Dendritic cell treated with granulocyte-macrophage colony-stimulating factor and Interleukin-4, amounts not matched to agents 40 ng/mL and 50 ng/mL, for 4 days (primary cell): ENCODE measurements at regions of chr10 and their contacts with region 1.

Region 1: GRCh38 chr10:4333459-4333894 is 492.5 kb upstream of the AKR1E2 start:
- H3K4me3 Mint-ChIP-seq: no peak overlapping the region
- H3K27ac Mint-ChIP-seq: no peak overlapping the region
- H3K4me1 Mint-ChIP-seq: peaks cover 6% of the 10 kb centered on the region
- H3K27me3 Mint-ChIP-seq: no peaks in the 10 kb centered on the region

Region 2: DNA sequence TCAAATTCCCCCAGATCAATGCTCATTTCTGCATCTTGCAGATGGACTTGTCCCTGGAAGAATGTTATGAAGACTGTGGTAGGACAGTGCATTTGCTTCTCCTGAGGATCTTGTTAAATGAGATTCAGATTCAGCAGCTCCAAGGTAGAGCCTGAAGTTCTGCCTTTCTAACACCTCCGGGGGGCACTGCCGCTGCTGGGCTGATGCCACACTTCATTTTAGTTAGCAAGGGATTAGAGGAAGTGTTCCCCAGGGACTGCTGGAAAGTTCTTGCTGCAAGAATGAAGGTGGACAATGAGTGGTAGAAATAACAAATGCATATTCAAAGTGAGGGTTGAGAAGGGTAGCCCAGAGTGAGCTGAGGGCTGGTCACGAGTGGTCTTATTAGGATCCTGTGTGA is 58.2 kb after region 1 on chr10:
- intact Hi-C with region 1: no loop called
- H3K4me3 Mint-ChIP-seq: no peak overlapping the region
- H3K27ac Mint-ChIP-seq: no peak overlapping the region
- H3K4me1 Mint-ChIP-seq: no peaks in the 10 kb centered on the region
- H3K27me3 Mint-ChIP-seq: peaks cover 7% of the 10 kb centered on the region

Region 3: DNA sequence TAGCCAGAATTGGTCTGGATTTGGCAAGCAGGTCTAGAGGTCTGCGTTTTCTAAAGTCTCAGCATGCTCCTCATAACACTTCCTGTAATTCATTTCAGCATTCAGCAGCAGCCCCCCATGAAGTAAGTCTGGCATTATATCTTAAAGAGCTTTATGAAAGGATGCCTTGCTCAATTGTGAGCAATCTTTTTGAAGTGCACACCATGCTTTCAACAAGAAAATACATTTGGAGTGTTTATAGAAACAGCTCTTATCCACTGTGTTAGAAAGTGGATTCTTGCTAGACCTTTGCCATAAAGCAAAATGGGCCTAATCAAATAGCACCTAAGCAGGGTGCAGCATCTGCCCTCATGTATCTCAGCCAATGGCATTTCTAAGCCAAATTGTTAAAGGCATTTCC is 114.6 kb after region 1 on chr10:
- intact Hi-C with region 1: loop called (anchors 10 kb)
- H3K4me3 Mint-ChIP-seq: no peak overlapping the region
- H3K27ac Mint-ChIP-seq: no peak overlapping the region
- H3K4me1 Mint-ChIP-seq: peaks cover 19% of the 10 kb centered on the region
- H3K27me3 Mint-ChIP-seq: peaks cover 2% of the 10 kb centered on the region

Region 4: GRCh38 chr10:4656576-4657182 is 323.2 kb after region 1 on chr10:
- intact Hi-C with region 1: loop called (anchors 5 kb)
- H3K4me3 Mint-ChIP-seq: no peak overlapping the region
- H3K27ac Mint-ChIP-seq: no peak overlapping the region
- H3K4me1 Mint-ChIP-seq: no peaks in the 10 kb centered on the region
- H3K27me3 Mint-ChIP-seq: peaks cover 9% of the 10 kb centered on the region